T-cell (primary cell): ENCODE measurements at regions of chr3 and their contacts with region 1.

Region 1: GRCh38 chr3:152268555-152269425 is at the start of gene MBNL1:
- DNase-seq: peak; percentile 74 to 93 (median 82)
- ATAC-seq: peak; percentile 71 to 80 (median 78)
- H3K4me3 ChIP-seq: peak within 1 kb of the TSS; percentile 77 to 99
- H3K4me3 Mint-ChIP-seq: peak within 1 kb of the TSS; percentile 85 to 99 (median 86)
- H3K27ac ChIP-seq: peak within 1 kb of the TSS; percentile 95
- H3K27ac Mint-ChIP-seq: peak within 1 kb of the TSS; percentile 94
- H3K4me1 ChIP-seq: peaks cover 21 to 58% of the 10 kb centered on the region in 2 experiments
- H3K4me1 Mint-ChIP-seq: peaks cover 62 to 76% (median 63%) of the 10 kb centered on the region in 3 donors
- H3K27me3 ChIP-seq: no peaks in the 10 kb centered on the region
- H3K27me3 Mint-ChIP-seq: no peaks in the 10 kb centered on the region
- total RNA-seq, gene MBNL1: 408 to 705 (median 423) TPM

Region 2: DNA sequence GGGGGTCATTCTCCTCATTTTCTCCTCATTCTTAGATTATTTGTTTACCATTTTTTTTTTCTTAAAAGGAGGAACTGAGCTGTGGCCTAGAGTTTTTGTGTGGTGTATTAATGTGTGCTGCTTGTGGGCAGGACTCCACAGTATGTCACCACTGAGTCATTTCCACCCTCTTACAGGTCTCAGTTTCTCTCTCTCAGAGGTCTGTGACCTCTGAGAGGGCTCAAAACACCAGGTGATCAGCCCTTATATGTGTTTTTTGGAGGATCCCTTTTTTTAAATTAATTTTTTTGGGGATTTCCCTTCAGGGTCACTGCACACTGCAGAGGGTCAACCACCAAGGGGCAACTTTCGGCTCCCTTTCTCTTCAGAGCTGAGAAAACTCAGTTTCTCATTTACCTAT is 228.9 kb before region 1 on chr3:
- CTCF ChIA-PET with region 1: no interaction called
- POLR2A ChIA-PET with region 1: no interaction called
- DNase-seq: no peak
- ATAC-seq: no peak
- H3K4me3 ChIP-seq: no peak overlapping the region
- H3K4me3 Mint-ChIP-seq: no peak overlapping the region
- H3K27ac ChIP-seq: no peak overlapping the region
- H3K27ac Mint-ChIP-seq: no peak overlapping the region
- H3K4me1 ChIP-seq: no peaks in the 10 kb centered on the region
- H3K4me1 Mint-ChIP-seq: peaks cover 0 to 5% (median 3%) of the 10 kb centered on the region in 3 donors
- H3K27me3 ChIP-seq: no peaks in the 10 kb centered on the region
- H3K27me3 Mint-ChIP-seq: no peaks in the 10 kb centered on the region

Region 3: GRCh38 chr3:152199102-152199840 is 69.5 kb before region 1 on chr3:
- CTCF ChIA-PET with region 1: interaction called in 1 of 2 experiments, 6 read pairs
- POLR2A ChIA-PET with region 1: interaction called in 1 of 2 experiments, 23 read pairs
- DNase-seq: peak in 2 of 35 experiments; percentile 19 to 62
- ATAC-seq: peak; percentile 14 to 50 (median 37)
- H3K4me3 ChIP-seq: peak overlapping the region in 1 of 2 donors; percentile 23
- H3K4me3 Mint-ChIP-seq: peak overlapping the region; percentile 75 to 83 (median 79)
- H3K27ac ChIP-seq: peak overlapping the region; percentile 71
- H3K27ac Mint-ChIP-seq: peak overlapping the region; percentile 97 to 98
- H3K4me1 ChIP-seq: peaks cover 31 to 66% of the 10 kb centered on the region in 2 experiments
- H3K4me1 Mint-ChIP-seq: peaks cover 82 to 88% (median 83%) of the 10 kb centered on the region in 3 donors
- H3K27me3 ChIP-seq: no peaks in the 10 kb centered on the region
- H3K27me3 Mint-ChIP-seq: no peaks in the 10 kb centered on the region

Region 4: GRCh38 chr3:152241142-152242017 is 27.4 kb before region 1 on chr3:
- CTCF ChIA-PET with region 1: interaction called in 1 of 2 experiments, 15 read pairs
- POLR2A ChIA-PET with region 1: interaction called, 20 to 47 read pairs
- DNase-seq: peak in 1 of 35 experiments; percentile 51
- ATAC-seq: peak in 3 of 4 experiments; percentile 24 to 41 (median 29)
- H3K4me3 ChIP-seq: no peak overlapping the region
- H3K4me3 Mint-ChIP-seq: peak overlapping the region; percentile 61 to 97 (median 94)
- H3K27ac ChIP-seq: peak overlapping the region; percentile 83
- H3K27ac Mint-ChIP-seq: peak overlapping the region; percentile 95
- H3K4me1 ChIP-seq: peaks cover 13 to 52% of the 10 kb centered on the region in 2 experiments
- H3K4me1 Mint-ChIP-seq: peaks cover 64 to 66% (median 65%) of the 10 kb centered on the region in 3 donors
- H3K27me3 ChIP-seq: no peaks in the 10 kb centered on the region
- H3K27me3 Mint-ChIP-seq: no peaks in the 10 kb centered on the region

Region 5: GRCh38 chr3:152281133-152281713 is 12.4 kb after region 1 on chr3:
- CTCF ChIA-PET with region 1: interaction called in 1 of 2 experiments, 6 read pairs
- POLR2A ChIA-PET with region 1: interaction called, 6 to 15 read pairs
- DNase-seq: no peak
- ATAC-seq: peak in 1 of 4 experiments; percentile 4
- H3K4me3 ChIP-seq: peak overlapping the region; percentile 13 to 38
- H3K4me3 Mint-ChIP-seq: peak overlapping the region; percentile 52 to 69 (median 64)
- H3K27ac ChIP-seq: peak overlapping the region; percentile 65
- H3K27ac Mint-ChIP-seq: peak overlapping the region; percentile 73 to 78
- H3K4me1 ChIP-seq: peaks cover 14 to 83% of the 10 kb centered on the region in 2 experiments
- H3K4me1 Mint-ChIP-seq: peaks cover 82 to 93% (median 84%) of the 10 kb centered on the region in 3 donors
- H3K27me3 ChIP-seq: no peaks in the 10 kb centered on the region
- H3K27me3 Mint-ChIP-seq: no peaks in the 10 kb centered on the region

Region 6: GRCh38 chr3:152314677-152315353 is 46.0 kb after region 1 on chr3:
- CTCF ChIA-PET with region 1: interaction called in 1 of 2 experiments, 3 read pairs
- POLR2A ChIA-PET with region 1: interaction called, 5 to 29 read pairs
- DNase-seq: no peak
- ATAC-seq: no peak
- H3K4me3 ChIP-seq: no peak overlapping the region
- H3K4me3 Mint-ChIP-seq: peak overlapping the region in 2 of 3 donors; percentile 2 to 34
- H3K27ac ChIP-seq: no peak overlapping the region
- H3K27ac Mint-ChIP-seq: peak overlapping the region; percentile 38 to 73
- H3K4me1 ChIP-seq: peaks cover 26 to 29% of the 10 kb centered on the region in 2 experiments
- H3K4me1 Mint-ChIP-seq: peaks cover 77 to 82% (median 77%) of the 10 kb centered on the region in 3 donors
- H3K27me3 ChIP-seq: no peaks in the 10 kb centered on the region
- H3K27me3 Mint-ChIP-seq: no peaks in the 10 kb centered on the region

Region 7: DNA sequence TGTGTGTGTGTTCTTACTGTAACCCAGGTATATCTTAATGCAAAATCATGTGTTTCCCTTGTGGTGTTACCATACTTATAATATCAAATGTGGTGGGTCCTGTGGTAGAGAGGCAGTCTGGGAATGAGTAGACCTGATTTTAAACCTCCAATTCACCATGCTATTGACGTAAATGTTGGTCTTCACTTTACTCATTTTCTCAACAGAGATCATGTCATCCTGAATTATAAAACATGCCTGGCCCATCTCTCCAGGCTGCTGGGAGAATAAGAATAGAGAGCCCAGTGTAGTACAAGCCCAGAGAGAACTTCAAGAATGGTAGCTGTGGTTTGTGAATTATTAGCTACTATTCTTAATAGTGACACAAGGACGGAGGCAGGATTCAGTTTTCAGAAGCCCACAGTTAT is 88.1 kb after region 1 on chr3:
- CTCF ChIA-PET with region 1: no interaction called
- POLR2A ChIA-PET with region 1: no interaction called
- DNase-seq: no peak
- ATAC-seq: peak in 1 of 4 experiments; percentile 28
- H3K4me3 ChIP-seq: no peak overlapping the region
- H3K4me3 Mint-ChIP-seq: peak overlapping the region in 1 of 3 donors; percentile 2
- H3K27ac ChIP-seq: no peak overlapping the region
- H3K27ac Mint-ChIP-seq: peak overlapping the region; percentile 76 to 82
- H3K4me1 ChIP-seq: peaks cover 2 to 18% of the 10 kb centered on the region in 2 experiments
- H3K4me1 Mint-ChIP-seq: peaks cover 82 to 86% (median 83%) of the 10 kb centered on the region in 3 donors
- H3K27me3 ChIP-seq: no peaks in the 10 kb centered on the region
- H3K27me3 Mint-ChIP-seq: no peaks in the 10 kb centered on the region